Panc1 (cell line): ENCODE measurements at regions of chr10 and their contacts with region 1.

Region 1: GRCh38 chr10:97888641-97889262 is 39.1 kb downstream of the GOLGA7B start:
- DNase-seq: no peak
- ATAC-seq: peak; percentile 64
- H3K4me3 ChIP-seq: no peak overlapping the region
- H3K27ac ChIP-seq: no peak overlapping the region
- H3K4me1 ChIP-seq: peaks cover 4% of the 10 kb centered on the region; the same call in 1 of the 2 replicates
- H3K27me3 ChIP-seq: no peaks in the 10 kb centered on the region; the same call in 1 of the 2 replicates
- CTCF ChIP-seq: no peak

Region 2: GRCh38 chr10:97629289-97629688 is 259.5 kb before region 1 on chr10:
- CTCF ChIA-PET with region 1: no interaction called
- POLR2A ChIA-PET with region 1: no interaction called
- in situ Hi-C with region 1: no loop called
- intact Hi-C with region 1: no loop called
- DNase-seq: no peak
- ATAC-seq: no peak
- H3K4me3 ChIP-seq: no peak overlapping the region
- H3K27ac ChIP-seq: no peak overlapping the region
- H3K4me1 ChIP-seq: peaks cover 7% of the 10 kb centered on the region; the same call in 1 of the 2 replicates
- H3K27me3 ChIP-seq: no peaks in the 10 kb centered on the region
- CTCF ChIP-seq: no peak

Region 3: DNA sequence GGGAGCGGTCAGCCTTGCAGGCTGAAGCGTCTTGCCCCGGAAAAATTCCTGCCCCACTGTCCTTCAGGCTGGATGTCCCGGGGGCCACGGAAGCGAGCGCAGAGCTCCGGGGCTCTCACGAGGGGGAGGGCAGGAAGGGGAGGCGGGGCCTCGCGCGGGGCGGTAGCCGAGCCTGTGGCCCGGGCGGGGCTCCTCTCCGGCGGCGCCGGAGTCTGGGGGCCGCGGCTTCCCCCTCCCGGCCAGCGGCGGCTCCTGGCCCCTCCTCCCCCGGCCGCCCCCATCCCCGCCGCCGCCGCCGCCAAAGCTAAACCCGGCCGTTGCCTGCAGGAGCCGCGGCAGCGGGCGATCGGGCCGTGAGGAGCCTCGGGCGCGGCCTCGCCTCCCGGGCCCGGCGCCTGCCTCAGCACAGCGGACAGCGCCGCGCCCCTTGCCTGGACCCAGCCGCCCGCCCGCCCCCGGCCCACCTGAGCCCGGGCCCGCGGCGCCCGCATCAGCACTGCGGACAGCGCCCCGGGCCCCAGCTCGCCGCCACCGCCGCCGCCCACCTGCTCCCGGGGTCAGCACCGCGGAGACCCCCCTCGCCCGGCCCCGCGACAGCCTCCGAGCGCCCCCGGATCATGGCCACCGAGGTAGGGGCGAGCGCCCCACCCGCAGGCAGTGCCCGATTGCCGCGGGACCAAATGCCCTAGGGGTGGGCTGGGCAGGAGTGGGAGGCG is 38.9 kb before region 1 on chr10 and contains the start of gene GOLGA7B:
- CTCF ChIA-PET with region 1: no interaction called
- POLR2A ChIA-PET with region 1: interaction called, 11 read pairs
- in situ Hi-C with region 1: no loop called
- intact Hi-C with region 1: no loop called
- DNase-seq: no peak
- ATAC-seq: peak; percentile 89
- H3K4me3 ChIP-seq: peak within 1 kb of the TSS; percentile 39 to 62
- H3K27ac ChIP-seq: no peak within 1 kb of the TSS
- H3K4me1 ChIP-seq: no peaks in the 10 kb centered on the region
- H3K27me3 ChIP-seq: peaks cover 12% of the 10 kb centered on the region
- CTCF ChIP-seq: no peak
- total RNA-seq, gene GOLGA7B: 1.5 TPM